ENCODE measurements at regions of chr7 and their contacts with region 1.

Region 1: DNA sequence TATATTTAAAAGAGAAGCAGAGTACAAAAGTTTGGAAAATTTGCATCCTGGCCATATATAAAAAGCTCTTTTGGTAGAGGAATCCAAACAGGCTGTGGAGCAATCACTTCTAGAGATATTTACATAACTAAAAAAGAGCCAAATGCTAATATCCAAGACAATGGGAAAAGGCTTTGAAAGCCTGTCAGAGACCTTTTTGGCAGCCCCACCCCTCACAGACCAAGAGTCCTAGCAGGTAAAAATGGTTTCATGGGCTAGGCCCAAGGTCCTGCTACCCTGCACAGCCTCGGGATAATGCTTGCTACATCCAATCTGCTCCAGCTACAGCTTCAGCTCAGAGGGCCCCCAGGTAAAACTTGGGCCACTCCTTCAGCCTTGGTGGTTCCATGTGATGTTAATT is 430.2 kb upstream of the KCND2 start:
- DNase-seq: no peak
- ATAC-seq: no peak
- H3K4me3 ChIP-seq: no peak overlapping the region
- H3K27ac ChIP-seq: no peak overlapping the region
- H3K4me1 ChIP-seq: no peaks in the 10 kb centered on the region
- H3K27me3 ChIP-seq: no peaks in the 10 kb centered on the region
- CTCF ChIP-seq: no peak
- POLR2A ChIP-seq: no peak

Region 2: DNA sequence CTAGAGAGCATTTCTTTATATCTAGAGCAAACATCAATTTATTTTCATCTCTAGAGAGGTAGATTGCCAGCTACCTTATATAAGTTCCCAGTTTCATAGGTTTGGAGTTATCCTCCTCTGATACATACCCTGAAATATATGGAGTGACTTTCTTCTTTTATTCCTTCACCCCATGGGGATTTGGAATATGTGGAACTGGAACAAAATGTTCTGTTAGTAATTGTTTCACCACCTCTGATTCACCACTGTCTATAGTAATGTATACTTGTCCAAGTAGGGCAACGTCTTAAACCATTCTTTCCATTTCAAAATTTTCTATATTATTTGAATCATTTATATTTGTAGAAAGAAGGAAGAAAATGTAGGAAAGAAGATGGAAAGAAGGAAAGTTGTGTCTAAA is 81.0 kb before region 1 on chr7:
- intact Hi-C with region 1: no loop called
- DNase-seq: no peak
- ATAC-seq: no peak
- H3K4me3 ChIP-seq: no peak overlapping the region
- H3K27ac ChIP-seq: no peak overlapping the region
- H3K4me1 ChIP-seq: no peaks in the 10 kb centered on the region
- H3K27me3 ChIP-seq: no peaks in the 10 kb centered on the region
- CTCF ChIP-seq: no peak
- POLR2A ChIP-seq: no peak

Region 3: DNA sequence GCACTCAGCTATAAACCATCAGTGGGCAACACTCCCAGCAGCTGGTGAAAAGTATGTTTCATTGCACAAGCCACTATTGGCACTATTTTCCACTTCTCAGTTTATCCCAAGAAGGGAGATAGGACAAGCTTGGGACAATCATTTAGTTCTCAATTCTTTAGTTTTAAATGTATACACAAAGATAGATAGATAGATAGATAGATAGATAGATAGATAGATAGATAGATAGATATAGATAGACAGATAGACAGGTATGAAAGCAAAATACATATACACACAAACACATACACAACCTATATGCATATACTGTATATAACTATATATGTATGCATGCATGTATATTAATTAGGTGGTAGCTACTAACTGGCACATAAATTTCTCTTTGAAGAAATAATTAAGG is 18.6 kb after region 1 on chr7:
- intact Hi-C with region 1: loop called in 1 of 10 experiments (anchors 1 kb)
- DNase-seq: no peak
- ATAC-seq: no peak
- H3K4me3 ChIP-seq: no peak overlapping the region
- H3K27ac ChIP-seq: no peak overlapping the region
- H3K4me1 ChIP-seq: no peaks in the 10 kb centered on the region
- H3K27me3 ChIP-seq: no peaks in the 10 kb centered on the region
- CTCF ChIP-seq: no peak
- POLR2A ChIP-seq: no peak

Measured in heart left ventricle (tissue), 16 donors.